ENCODE measurements at regions of chr2 and their contacts with region 1.

Region 1: DNA sequence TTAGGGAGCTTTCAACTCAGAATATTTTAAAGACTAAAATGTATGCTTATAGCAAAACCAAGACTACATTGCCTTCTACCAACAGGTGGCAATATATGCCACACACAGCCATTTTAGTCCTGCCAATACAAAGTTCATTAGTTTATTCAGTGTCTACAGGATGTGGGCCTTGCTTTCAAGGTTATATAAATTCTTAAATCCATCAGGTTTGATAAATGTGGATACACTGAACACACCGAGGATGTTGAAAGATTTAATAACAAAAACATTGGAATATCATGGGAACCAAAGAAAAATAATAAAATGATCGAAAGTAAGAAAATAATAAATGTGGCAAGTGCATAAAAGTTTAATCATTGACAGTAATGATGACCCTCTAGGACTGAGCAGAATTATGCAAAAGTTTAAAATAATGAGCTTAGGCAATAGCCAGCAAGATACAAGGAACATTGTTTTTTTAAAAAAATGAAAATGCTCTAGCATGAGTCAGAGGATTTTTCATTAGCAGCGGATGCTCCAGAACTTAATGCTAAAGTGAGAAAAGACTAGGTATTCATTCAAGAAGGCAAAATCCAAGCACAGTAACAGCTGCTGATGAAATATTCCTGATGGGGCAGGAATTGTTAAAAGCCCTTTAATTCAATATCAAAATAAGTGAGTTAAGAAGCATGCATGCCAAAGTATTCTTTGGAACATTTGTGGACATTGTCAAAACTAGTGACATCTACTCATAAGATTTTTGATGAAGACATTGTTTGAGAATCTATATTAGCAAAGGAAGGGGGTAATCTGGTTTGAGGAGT is 14.2 kb downstream of the SCN9A start:
- DNase-seq: no peak

Region 2: GRCh38 chr2:166256896-166257295 is 104.7 kb before region 1 on chr2:
- CTCF ChIA-PET with region 1: no interaction called
- POLR2A ChIA-PET with region 1: no interaction called
- DNase-seq: no peak

Region 3: GRCh38 chr2:166375736-166376487 is 14.4 kb after region 1 on chr2 and contains the start of gene SCN9A:
- CTCF ChIA-PET with region 1: interaction called, 11 read pairs
- POLR2A ChIA-PET with region 1: no interaction called
- DNase-seq: peak; percentile 79